H1 (cell line): ENCODE measurements at regions of chr5 and their contacts with region 1.

Region 1: DNA sequence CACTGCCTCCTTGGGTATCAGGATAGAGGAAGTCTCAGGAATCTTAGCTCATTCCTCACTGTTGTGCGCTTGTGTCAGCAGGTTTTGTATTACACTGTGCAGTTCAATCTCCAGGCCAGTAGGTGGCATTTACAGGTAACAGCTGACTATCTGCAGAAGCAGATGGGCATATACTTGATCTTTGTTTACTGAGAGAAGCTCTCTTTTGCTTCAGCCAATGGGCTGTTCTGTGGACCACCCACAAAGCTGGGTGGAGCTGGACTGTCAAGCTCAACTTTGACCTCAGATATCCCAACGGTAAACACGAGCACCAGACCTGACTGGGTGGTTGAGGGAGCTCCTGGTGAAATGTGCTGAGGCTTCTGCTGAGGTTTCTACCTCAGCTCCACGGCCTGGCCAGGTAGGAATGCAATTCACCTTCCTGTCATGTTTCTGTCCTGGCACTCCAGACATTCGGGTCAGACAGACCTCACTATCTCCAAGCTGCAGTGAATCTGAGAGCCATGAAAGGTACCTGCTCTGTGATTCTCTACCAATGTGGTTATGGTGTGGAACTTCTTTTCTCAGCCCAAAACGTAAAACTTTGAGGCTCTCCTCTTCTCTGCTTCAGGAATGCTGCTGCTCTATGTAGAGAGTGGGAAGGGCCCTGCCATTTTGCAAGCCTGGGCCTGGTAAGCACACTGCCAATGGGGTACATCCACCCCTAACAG is 167.9 kb upstream of the ACTBL2 start:
- DNase-seq: peak; percentile 33 to 49
- H3K4me3 ChIP-seq: no peak overlapping the region
- H3K27ac ChIP-seq: no peak overlapping the region
- H3K4me1 ChIP-seq: no peaks in the 10 kb centered on the region; a peak in 2 of 7 replicates
- H3K27me3 ChIP-seq: no peaks in the 10 kb centered on the region
- CTCF ChIP-seq: peak in 2 of 3 experiments; percentile 47 to 89; a peak in 3 of 4 replicates
- EP300 ChIP-seq: no peak
- POLR2A ChIP-seq: no peak
- RAD21 ChIP-seq: peak; percentile 71 to 73

Region 2: GRCh38 chr5:57094753-57095683 is 555.5 kb before region 1 on chr5:
- CTCF ChIA-PET with region 1: no interaction called
- POLR2A ChIA-PET with region 1: no interaction called
- DNase-seq: peak; percentile 15 to 78
- H3K4me3 ChIP-seq: no peak overlapping the region
- H3K27ac ChIP-seq: no peak overlapping the region
- H3K4me1 ChIP-seq: peaks cover 0 to 3% (median under 1%) of the 10 kb centered on the region in 4 experiments; a peak in 1 of 7 replicates
- H3K27me3 ChIP-seq: no peaks in the 10 kb centered on the region
- CTCF ChIP-seq: peak; percentile 51 to 73 (median 66)
- EP300 ChIP-seq: no peak
- POLR2A ChIP-seq: no peak
- RAD21 ChIP-seq: peak; percentile 51 to 60

Region 3: GRCh38 chr5:57243286-57244137 is 407.0 kb before region 1 on chr5:
- CTCF ChIA-PET with region 1: no interaction called
- POLR2A ChIA-PET with region 1: no interaction called
- DNase-seq: no peak
- H3K4me3 ChIP-seq: no peak overlapping the region
- H3K27ac ChIP-seq: no peak overlapping the region
- H3K4me1 ChIP-seq: no peaks in the 10 kb centered on the region; a peak in 1 of 7 replicates
- H3K27me3 ChIP-seq: no peaks in the 10 kb centered on the region
- CTCF ChIP-seq: no peak
- EP300 ChIP-seq: no peak
- POLR2A ChIP-seq: no peak
- RAD21 ChIP-seq: no peak

Region 4: DNA sequence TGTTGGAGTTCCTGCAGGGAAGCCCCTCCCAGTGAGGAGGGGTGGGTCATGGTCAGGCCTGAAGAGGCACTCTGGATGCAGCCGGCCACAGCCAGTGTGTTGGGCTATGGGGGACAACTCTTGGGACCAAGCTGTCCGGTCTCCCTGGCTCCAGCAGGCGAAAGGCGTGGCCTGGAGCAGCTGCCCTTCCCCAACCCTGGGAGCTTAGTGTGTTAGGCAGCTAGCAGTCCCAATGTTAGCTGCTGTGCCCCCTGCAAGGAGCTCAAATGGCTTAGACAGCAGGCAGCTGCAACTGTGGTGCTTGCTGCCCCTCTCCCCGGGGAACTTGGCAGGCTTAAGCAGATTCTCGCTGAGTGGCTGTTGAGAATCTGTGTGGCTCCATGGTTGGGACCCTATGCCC is 100.4 kb before region 1 on chr5:
- CTCF ChIA-PET with region 1: no interaction called
- POLR2A ChIA-PET with region 1: no interaction called
- DNase-seq: no peak
- H3K4me3 ChIP-seq: no peak overlapping the region
- H3K27ac ChIP-seq: no peak overlapping the region
- H3K4me1 ChIP-seq: peaks cover 0 to 8% (median 1%) of the 10 kb centered on the region in 4 experiments; a peak in 4 of 7 replicates
- H3K27me3 ChIP-seq: no peaks in the 10 kb centered on the region
- CTCF ChIP-seq: no peak
- EP300 ChIP-seq: no peak
- POLR2A ChIP-seq: no peak
- RAD21 ChIP-seq: no peak

Region 5: DNA sequence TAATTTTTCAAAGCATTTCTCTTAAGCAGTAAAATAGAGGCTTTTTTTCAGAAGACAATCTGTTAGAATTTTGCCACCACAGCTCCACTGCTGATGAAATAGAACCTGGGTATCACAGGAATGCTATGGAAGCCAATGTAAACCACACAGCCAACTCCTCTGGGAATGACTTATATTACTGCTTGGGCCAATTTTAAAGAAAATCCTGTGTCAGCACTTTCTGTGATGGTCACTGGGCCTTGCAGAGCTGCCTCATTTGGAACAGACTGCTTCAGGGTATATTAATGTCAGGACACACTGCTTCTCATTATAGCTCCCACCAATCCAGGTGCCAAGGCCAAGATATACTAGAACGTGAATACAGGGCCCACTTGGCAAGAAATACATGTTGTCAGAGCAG is 23.8 kb before region 1 on chr5:
- CTCF ChIA-PET with region 1: interaction called, 21 read pairs
- POLR2A ChIA-PET with region 1: no interaction called
- DNase-seq: no peak
- H3K4me3 ChIP-seq: no peak overlapping the region
- H3K27ac ChIP-seq: no peak overlapping the region
- H3K4me1 ChIP-seq: no peaks in the 10 kb centered on the region
- H3K27me3 ChIP-seq: no peaks in the 10 kb centered on the region
- CTCF ChIP-seq: no peak
- EP300 ChIP-seq: no peak
- POLR2A ChIP-seq: no peak
- RAD21 ChIP-seq: no peak

Region 6: GRCh38 chr5:57635146-57635777 is 15.3 kb before region 1 on chr5:
- CTCF ChIA-PET with region 1: interaction called, 28 read pairs
- POLR2A ChIA-PET with region 1: no interaction called
- DNase-seq: no peak
- H3K4me3 ChIP-seq: no peak overlapping the region
- H3K27ac ChIP-seq: no peak overlapping the region
- H3K4me1 ChIP-seq: no peaks in the 10 kb centered on the region
- H3K27me3 ChIP-seq: no peaks in the 10 kb centered on the region
- CTCF ChIP-seq: no peak
- EP300 ChIP-seq: no peak
- POLR2A ChIP-seq: no peak
- RAD21 ChIP-seq: no peak

Region 7: DNA sequence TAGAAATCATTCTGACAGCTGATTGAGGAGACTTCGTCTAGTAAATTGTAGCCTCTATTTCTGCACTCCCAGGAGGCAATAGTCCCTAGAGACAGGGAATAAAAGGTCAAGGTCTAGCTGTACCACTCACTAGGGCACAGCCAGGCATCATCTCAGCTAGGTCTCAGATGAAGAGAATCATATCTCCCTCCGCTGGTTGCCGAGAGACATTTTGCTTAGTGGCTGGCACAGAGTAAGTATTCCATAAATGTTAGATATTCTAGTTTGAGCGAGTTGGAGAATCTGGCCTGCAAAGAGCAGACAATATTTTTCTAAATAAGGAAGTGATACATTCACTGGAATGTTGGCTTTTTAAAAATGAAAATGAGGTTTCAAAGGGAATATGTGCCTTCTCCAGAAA is 12.5 kb after region 1 on chr5:
- CTCF ChIA-PET with region 1: interaction called, 20 read pairs
- POLR2A ChIA-PET with region 1: no interaction called
- DNase-seq: no peak
- H3K4me3 ChIP-seq: no peak overlapping the region
- H3K27ac ChIP-seq: no peak overlapping the region
- H3K4me1 ChIP-seq: peaks cover 0 to 5% (median 0%) of the 10 kb centered on the region in 4 experiments; a peak in 1 of 7 replicates
- H3K27me3 ChIP-seq: no peaks in the 10 kb centered on the region
- CTCF ChIP-seq: no peak
- EP300 ChIP-seq: no peak
- POLR2A ChIP-seq: no peak
- RAD21 ChIP-seq: 0 out of 4 replicates have a peak, but pooled peaks of 1 of the 2 experiments have one; percentile 5

Region 8: DNA sequence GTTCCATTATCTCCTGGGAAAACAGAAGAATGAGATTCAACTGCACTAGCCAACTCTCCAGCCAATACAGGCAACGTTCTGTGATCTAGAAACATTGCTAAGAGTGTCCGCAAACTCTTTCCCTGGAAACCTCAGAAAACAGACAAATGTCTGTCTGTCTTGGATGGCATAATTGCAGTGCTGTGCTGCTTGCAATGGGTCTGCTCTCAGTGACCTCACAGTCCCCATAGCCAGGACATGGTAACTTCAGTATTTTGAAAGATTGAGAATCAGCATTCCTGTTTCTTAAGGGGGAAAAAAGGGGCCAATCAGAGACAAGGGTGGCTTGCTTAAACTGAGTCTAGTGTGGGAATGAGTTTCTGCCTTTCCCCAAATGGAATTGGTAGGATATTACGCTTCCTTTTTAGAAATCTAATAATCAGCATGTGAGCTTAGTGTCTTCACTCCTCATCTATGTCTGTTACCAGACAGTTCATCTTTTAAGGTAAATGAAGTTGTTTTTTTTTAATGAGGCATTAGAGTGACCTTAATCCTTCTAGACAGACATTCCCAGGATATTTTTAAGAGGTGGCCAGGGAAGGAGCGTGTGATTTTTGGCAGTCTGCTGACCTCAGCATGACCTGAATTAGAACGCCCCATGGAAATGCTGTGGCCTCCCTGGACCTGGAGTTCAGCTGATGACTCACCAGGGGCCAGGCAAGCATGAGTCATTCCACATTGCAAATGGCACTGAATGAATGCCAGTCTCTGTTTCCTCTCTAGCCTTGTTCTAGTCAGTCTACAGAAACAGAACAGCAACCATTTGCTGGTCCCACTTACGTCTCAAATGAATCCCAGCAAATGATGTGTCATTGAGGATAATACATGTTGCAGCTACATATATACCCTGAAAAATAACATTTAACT is 42.3 kb after region 1 on chr5:
- CTCF ChIA-PET with region 1: interaction called, 14 read pairs
- POLR2A ChIA-PET with region 1: no interaction called
- DNase-seq: peak in 1 of 2 experiments; percentile 33
- H3K4me3 ChIP-seq: no peak overlapping the region
- H3K27ac ChIP-seq: no peak overlapping the region
- H3K4me1 ChIP-seq: peaks cover 0 to 3% (median 1%) of the 10 kb centered on the region in 4 experiments; a peak in 3 of 7 replicates
- H3K27me3 ChIP-seq: no peaks in the 10 kb centered on the region
- CTCF ChIP-seq: no peak
- EP300 ChIP-seq: no peak
- POLR2A ChIP-seq: no peak
- RAD21 ChIP-seq: no peak

Region 9: GRCh38 chr5:57903458-57903857 is 252.9 kb after region 1 on chr5:
- CTCF ChIA-PET with region 1: no interaction called
- POLR2A ChIA-PET with region 1: no interaction called
- DNase-seq: no peak
- H3K4me3 ChIP-seq: no peak overlapping the region
- H3K27ac ChIP-seq: no peak overlapping the region
- H3K4me1 ChIP-seq: no peaks in the 10 kb centered on the region
- H3K27me3 ChIP-seq: no peaks in the 10 kb centered on the region
- CTCF ChIP-seq: no peak
- EP300 ChIP-seq: no peak
- POLR2A ChIP-seq: no peak
- RAD21 ChIP-seq: no peak